Activated B cell treated with CpG ODN at 0.5 μM for 24 hours (primary cell): ENCODE measurements at regions of chr18 and their contacts with region 1.

Region 1: DNA sequence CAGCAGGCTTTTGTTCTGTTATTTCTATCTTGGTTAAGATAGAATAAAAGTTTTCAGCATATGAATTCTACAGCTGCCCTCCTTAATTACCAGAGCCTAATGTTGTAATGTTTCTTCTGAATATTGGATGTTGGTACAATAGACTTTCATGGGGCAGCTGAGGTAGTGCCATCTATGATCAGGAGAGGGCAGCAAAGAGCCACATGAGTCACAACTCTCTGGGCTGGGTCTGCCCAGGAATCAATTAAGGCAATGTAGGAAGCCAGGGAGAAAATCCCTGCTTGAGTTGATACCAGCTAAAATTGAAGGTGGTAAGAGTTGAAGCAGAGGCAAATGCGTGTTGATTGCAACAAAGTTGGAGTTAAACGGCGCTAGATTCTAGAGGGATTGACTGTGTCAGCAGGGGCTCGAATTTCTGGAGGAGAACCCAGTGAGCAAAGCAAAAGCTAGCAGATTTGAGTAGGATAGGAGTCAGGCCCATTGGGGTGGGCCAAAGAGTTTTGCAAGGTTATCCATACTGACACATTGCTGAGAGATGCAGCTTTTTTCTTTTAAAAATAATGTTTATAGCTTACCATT is 10.6 kb upstream of the MC5R start:
- DNase-seq: no peak
- ATAC-seq: peak; percentile 81
- H3K4me3 Mint-ChIP-seq: no peak overlapping the region
- H3K27ac Mint-ChIP-seq: no peak overlapping the region
- H3K4me1 Mint-ChIP-seq: no peaks in the 10 kb centered on the region
- H3K27me3 Mint-ChIP-seq: peaks cover 2% of the 10 kb centered on the region
- CTCF ChIP-seq: peak; percentile 77

Region 2: DNA sequence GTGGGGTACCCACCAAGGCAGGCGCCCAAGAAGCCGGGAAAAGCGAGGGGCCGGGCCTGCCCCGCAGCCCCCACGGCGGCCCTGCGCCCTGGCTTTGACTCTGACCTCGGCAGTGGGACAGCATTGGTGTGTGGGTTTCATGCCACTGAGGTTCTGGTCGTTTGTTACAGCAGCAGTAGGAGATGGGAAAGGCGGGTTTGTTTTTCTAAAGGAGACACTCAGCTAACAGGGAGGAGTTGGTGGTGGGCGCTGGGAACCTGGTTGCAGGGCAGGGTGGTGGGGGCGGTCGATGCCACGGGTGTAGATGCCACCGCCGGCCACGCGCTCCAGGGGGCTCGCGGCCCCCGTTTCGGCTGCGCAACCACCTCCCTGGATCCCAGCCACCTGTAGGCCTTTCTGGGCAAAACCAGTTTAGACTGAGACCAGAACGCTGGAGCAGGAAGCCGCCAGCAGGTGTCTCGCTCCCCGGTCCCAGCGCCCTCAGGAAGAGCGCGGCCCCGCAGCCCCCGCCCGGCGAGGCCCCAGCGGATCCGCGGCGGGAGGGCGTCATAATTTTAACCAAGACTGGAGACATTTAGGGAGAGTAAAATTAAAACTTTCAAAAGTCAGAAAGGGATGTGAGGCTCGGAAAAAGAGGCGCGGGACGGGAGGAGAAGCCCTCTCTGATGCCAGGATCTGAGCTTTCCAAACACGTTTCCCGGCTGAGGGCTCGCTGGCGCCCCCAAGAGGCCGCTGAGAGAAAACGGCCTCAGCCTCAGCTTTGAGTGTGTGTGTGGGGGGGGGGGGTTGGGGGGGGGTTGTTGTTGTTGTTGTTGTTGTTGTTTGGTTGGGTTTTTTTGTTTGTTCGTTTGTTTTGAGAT is 1541.8 kb before region 1 on chr18:
- CTCF ChIA-PET with region 1: no interaction called
- POLR2A ChIA-PET with region 1: no interaction called
- intact Hi-C with region 1: no loop called
- DNase-seq: peak; percentile 50
- ATAC-seq: peak; percentile 82
- H3K4me3 Mint-ChIP-seq: peak overlapping the region; percentile 73
- H3K27ac Mint-ChIP-seq: no peak overlapping the region
- H3K4me1 Mint-ChIP-seq: peaks cover 2% of the 10 kb centered on the region
- H3K27me3 Mint-ChIP-seq: peaks cover 13% of the 10 kb centered on the region
- CTCF ChIP-seq: no peak

Region 3: GRCh38 chr18:14086458-14087231 is 273.3 kb after region 1 on chr18:
- CTCF ChIA-PET with region 1: interaction called, 27 read pairs
- POLR2A ChIA-PET with region 1: no interaction called
- intact Hi-C with region 1: loop called (anchors 2 kb)
- DNase-seq: no peak
- ATAC-seq: no peak
- H3K4me3 Mint-ChIP-seq: no peak overlapping the region
- H3K27ac Mint-ChIP-seq: no peak overlapping the region
- H3K4me1 Mint-ChIP-seq: no peaks in the 10 kb centered on the region
- H3K27me3 Mint-ChIP-seq: no peaks in the 10 kb centered on the region
- CTCF ChIP-seq: no peak